ENCODE measurements at regions of chr5 and their contacts with region 1.

Region 1: GRCh38 chr5:169511708-169512107 is 71.9 kb upstream of the SPDL1 start:
- DNase-seq: no peak
- H3K4me3 ChIP-seq: no peak overlapping the region
- H3K4me3 Mint-ChIP-seq: no peak overlapping the region
- H3K27ac Mint-ChIP-seq: no peak overlapping the region
- H3K4me1 ChIP-seq: peaks cover 15% of the 10 kb centered on the region; the same call in 1 of the 2 replicates
- H3K4me1 Mint-ChIP-seq: peaks cover 7% of the 10 kb centered on the region
- H3K27me3 ChIP-seq: no peaks in the 10 kb centered on the region
- H3K27me3 Mint-ChIP-seq: no peaks in the 10 kb centered on the region
- CTCF ChIP-seq: peak; percentile 4 to 32

Region 2: GRCh38 chr5:169350759-169351240 is 160.9 kb before region 1 on chr5:
- CTCF ChIA-PET with region 1: no interaction called
- POLR2A ChIA-PET with region 1: no interaction called
- intact Hi-C with region 1: loop called (anchors 10 kb)
- DNase-seq: no peak
- H3K4me3 ChIP-seq: no peak overlapping the region
- H3K4me3 Mint-ChIP-seq: no peak overlapping the region
- H3K27ac Mint-ChIP-seq: peak overlapping the region; percentile 69
- H3K4me1 ChIP-seq: peaks cover 17% of the 10 kb centered on the region
- H3K4me1 Mint-ChIP-seq: peaks cover 30% of the 10 kb centered on the region
- H3K27me3 ChIP-seq: no peaks in the 10 kb centered on the region
- H3K27me3 Mint-ChIP-seq: no peaks in the 10 kb centered on the region
- CTCF ChIP-seq: no peak

Region 3: DNA sequence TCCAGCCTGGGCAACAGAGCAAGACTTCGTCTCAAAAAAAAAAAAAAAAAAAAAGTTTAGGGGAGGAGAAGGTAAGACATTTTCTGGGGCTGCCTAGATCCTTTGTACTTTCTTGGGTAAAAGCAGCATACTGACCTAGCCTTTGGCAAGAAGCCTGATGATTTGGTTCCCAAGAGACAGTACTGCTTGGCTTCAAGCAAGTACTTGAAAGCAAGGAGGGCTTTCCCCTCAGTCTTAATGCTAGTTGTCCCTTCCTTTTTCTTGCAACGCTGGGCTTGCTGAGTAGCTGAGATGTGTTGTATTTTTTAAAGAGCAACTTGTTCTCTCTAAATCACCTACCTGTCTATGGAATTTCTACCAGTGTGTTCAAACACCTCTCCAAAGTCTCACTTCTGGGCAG is 392.4 kb after region 1 on chr5:
- CTCF ChIA-PET with region 1: no interaction called
- POLR2A ChIA-PET with region 1: no interaction called
- intact Hi-C with region 1: no loop called
- DNase-seq: no peak
- H3K4me3 ChIP-seq: no peak overlapping the region
- H3K4me3 Mint-ChIP-seq: no peak overlapping the region
- H3K27ac Mint-ChIP-seq: no peak overlapping the region
- H3K4me1 ChIP-seq: no peaks in the 10 kb centered on the region
- H3K4me1 Mint-ChIP-seq: no peaks in the 10 kb centered on the region
- H3K27me3 ChIP-seq: no peaks in the 10 kb centered on the region
- H3K27me3 Mint-ChIP-seq: no peaks in the 10 kb centered on the region
- CTCF ChIP-seq: no peak